Activated T-helper 2 cell treated with anti-CD3 and anti-CD28 coated beads, Interferon-gamma antibody, Interleukin-2, Interleukin-4, amounts not matched to agents 10 μg/mL and 5 μg/mL and 100 μg/mL, durations not matched to agents 14 hours and 24 hours and 36 hours (primary cell): ENCODE measurements at regions of chr11 and their contacts with region 1.

Region 1: DNA sequence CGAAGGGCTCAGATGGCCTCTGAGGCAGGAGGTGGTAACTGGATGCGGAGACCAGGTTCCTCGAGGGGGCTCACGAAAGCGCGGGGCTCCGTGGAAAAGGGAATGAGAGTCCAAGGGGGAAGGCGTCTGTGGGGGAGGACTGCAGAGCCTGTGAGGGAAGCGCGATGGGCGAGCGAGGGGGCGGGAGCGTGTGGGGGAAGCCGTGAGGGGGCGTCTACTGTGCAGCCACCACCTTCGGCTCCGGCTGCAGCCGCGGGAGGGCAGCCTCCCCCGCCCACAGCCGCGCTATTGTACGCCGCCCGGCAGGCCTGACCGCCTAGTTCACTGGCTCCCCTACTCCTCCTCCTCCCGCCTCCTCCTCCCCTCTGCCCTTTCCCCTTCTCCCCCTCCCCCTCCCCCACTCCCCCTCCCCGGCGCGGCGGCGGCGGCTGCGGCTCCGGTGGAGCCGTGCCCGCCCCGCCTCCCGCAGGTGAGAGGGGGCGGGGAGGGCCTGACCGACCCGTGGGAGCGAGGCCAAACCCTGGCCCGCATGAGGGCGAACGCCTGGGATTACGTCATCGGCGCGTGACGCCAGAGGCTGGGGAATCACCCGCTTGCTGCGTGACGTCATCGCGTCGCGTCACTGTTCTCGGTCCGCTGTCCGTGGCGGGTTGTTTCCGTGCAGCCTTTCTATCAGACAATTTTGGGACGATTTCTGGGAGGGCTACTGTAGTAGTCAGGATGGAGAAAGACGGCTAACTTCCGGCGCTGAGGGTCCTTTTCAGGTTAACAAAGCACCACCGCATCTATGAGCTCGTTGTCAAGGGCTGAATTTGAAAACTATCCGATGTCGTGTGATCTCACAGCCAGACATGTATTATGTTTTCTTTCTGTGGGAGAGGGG is at the start of gene PAK1:
- DNase-seq: peak; percentile 75
- H3K4me3 Mint-ChIP-seq: peak within 1 kb of the TSS; percentile 78
- H3K27ac Mint-ChIP-seq: peak within 1 kb of the TSS; percentile 62
- H3K4me1 Mint-ChIP-seq: peaks cover 18% of the 10 kb centered on the region
- H3K27me3 Mint-ChIP-seq: peaks cover 26% of the 10 kb centered on the region
- total RNA-seq, gene PAK1: 39.0 and 40.7 TPM in 2 replicates

Region 2: GRCh38 chr11:77411717-77412441 is 62.2 kb before region 1 on chr11:
- intact Hi-C with region 1: loop called (anchors 2 kb)
- DNase-seq: peak; percentile 79
- H3K4me3 Mint-ChIP-seq: peak overlapping the region; percentile 84
- H3K27ac Mint-ChIP-seq: peak overlapping the region; percentile 75
- H3K4me1 Mint-ChIP-seq: peaks cover 33% of the 10 kb centered on the region
- H3K27me3 Mint-ChIP-seq: no peaks in the 10 kb centered on the region

Region 3: DNA sequence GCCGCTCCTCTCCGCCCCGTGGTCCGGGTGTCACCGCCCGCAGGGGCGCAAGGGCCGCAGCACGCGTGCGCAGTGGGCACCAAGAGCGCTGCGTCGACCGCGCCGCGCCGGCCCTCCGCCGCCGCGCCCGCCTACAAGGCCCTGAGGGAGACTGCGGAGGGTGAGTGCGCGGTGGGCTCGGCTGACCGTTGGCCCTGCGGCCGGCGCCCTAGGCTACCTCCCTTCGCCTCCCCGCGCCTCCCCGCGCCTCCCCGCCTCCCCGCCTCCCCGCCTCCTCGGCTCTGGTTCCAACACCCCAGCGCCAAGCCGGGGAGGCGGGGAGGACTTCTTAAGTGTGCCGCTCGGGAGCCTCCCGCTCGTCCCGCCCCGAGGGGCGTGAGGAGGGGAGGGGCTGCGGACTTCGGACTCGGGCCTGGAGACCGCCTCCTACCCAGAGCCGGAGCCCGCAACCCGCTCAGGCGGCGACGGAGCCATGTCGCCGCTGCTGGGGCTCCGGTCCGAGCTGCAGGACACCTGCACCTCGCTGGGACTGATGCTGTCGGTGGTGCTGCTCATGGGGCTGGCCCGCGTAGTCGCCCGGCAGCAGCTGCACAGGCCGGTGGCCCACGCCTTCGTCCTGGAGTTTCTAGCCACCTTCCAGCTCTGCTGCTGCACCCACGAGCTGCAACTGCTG is 115.6 kb after region 1 on chr11 and contains the start of gene AQP11:
- intact Hi-C with region 1: loop called (anchors 10 kb)
- DNase-seq: peak; percentile 65
- H3K4me3 Mint-ChIP-seq: peak within 1 kb of the TSS; percentile 89
- H3K27ac Mint-ChIP-seq: peak within 1 kb of the TSS; percentile 60
- H3K4me1 Mint-ChIP-seq: peaks cover 14% of the 10 kb centered on the region
- H3K27me3 Mint-ChIP-seq: peaks cover 8% of the 10 kb centered on the region
- total RNA-seq, gene AQP11: 0.52 and 0.97 TPM in 2 replicates